ENCODE measurements at regions of chr18 and their contacts with region 1.

Region 1: GRCh38 chr18:37270038-37270665 is 295.4 kb downstream of the CELF4 start:
- DNase-seq: peak; percentile 36
- H3K4me3 ChIP-seq: no peak overlapping the region
- H3K27ac ChIP-seq: no peak overlapping the region
- H3K4me1 ChIP-seq: no peaks in the 10 kb centered on the region
- H3K27me3 ChIP-seq: peaks cover 9% of the 10 kb centered on the region
- CTCF ChIP-seq: no peak

Region 2: DNA sequence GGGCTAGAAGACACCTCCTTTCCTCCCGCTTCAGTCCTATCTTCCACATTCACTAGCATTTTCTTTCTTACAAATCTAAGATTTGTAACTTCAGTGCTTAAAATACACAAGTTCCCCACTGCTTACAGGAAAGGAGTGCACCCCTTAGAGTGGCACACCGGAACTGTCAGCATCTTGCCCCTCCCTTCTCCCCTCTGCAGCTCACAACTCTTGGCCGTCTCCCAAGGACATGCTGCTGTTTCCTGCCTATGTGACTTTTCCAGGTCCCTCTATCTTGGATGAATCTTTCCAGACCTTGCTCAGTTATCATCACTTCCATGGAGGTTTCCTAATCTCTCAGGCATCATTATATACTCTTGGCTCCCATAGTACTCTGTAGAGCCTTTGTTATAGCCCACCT is 39.4 kb before region 1 on chr18:
- CTCF ChIA-PET with region 1: no interaction called
- dilution Hi-C with region 1: loop called (anchors 5 kb)
- in situ Hi-C with region 1: no loop called
- intact Hi-C with region 1: no loop called
- DNase-seq: no peak
- H3K4me3 ChIP-seq: no peak overlapping the region
- H3K27ac ChIP-seq: no peak overlapping the region
- H3K4me1 ChIP-seq: no peaks in the 10 kb centered on the region
- H3K27me3 ChIP-seq: no peaks in the 10 kb centered on the region
- CTCF ChIP-seq: no peak

Measured in mammary epithelial cell (primary cell).